ENCODE measurements at regions of chr7 and their contacts with region 1.

Region 1: GRCh38 chr7:102433219-102434038 is at the start of gene ORAI2:
- DNase-seq: peak; percentile 91
- ATAC-seq: peak; percentile 62
- H3K4me3 ChIP-seq: peak within 1 kb of the TSS; percentile 87 to 97 (median 94)
- H3K4me3 Mint-ChIP-seq: peak within 1 kb of the TSS; percentile 99
- H3K27ac ChIP-seq: peak within 1 kb of the TSS; percentile 98 to 100
- H3K27ac Mint-ChIP-seq: peak within 1 kb of the TSS; percentile 98
- H3K4me1 ChIP-seq: peaks cover 67 to 75% of the 10 kb centered on the region in 2 donors
- H3K4me1 Mint-ChIP-seq: peaks cover 67% of the 10 kb centered on the region
- H3K27me3 ChIP-seq: no peaks in the 10 kb centered on the region
- H3K27me3 Mint-ChIP-seq: no peaks in the 10 kb centered on the region
- CTCF ChIP-seq: no peak
- total RNA-seq, gene ORAI2: 450 and 461 TPM in 2 replicates

Region 2: GRCh38 chr7:102404005-102404861 is 29.2 kb before region 1 on chr7:
- CTCF ChIA-PET with region 1: interaction called, 1,182 read pairs
- POLR2A ChIA-PET with region 1: interaction called, 69 read pairs
- intact Hi-C with region 1: no loop called
- DNase-seq: peak; percentile 81
- ATAC-seq: peak; percentile 86
- H3K4me3 ChIP-seq: no peak overlapping the region
- H3K4me3 Mint-ChIP-seq: no peak overlapping the region
- H3K27ac ChIP-seq: no peak overlapping the region
- H3K27ac Mint-ChIP-seq: no peak overlapping the region
- H3K4me1 ChIP-seq: peaks cover 20 to 28% of the 10 kb centered on the region in 2 donors
- H3K4me1 Mint-ChIP-seq: peaks cover 36% of the 10 kb centered on the region
- H3K27me3 ChIP-seq: no peaks in the 10 kb centered on the region
- H3K27me3 Mint-ChIP-seq: no peaks in the 10 kb centered on the region
- CTCF ChIP-seq: peak; percentile 87

Region 3: GRCh38 chr7:102455596-102455995 is 22.2 kb after region 1 on chr7:
- CTCF ChIA-PET with region 1: interaction called, 10 read pairs
- POLR2A ChIA-PET with region 1: interaction called, 11 read pairs
- intact Hi-C with region 1: no loop called
- DNase-seq: no peak
- ATAC-seq: no peak
- H3K4me3 ChIP-seq: no peak overlapping the region
- H3K4me3 Mint-ChIP-seq: no peak overlapping the region
- H3K27ac ChIP-seq: no peak overlapping the region
- H3K27ac Mint-ChIP-seq: no peak overlapping the region
- H3K4me1 ChIP-seq: peaks cover 0 to 1% of the 10 kb centered on the region in 2 donors
- H3K4me1 Mint-ChIP-seq: peaks cover 6% of the 10 kb centered on the region
- H3K27me3 ChIP-seq: no peaks in the 10 kb centered on the region
- H3K27me3 Mint-ChIP-seq: no peaks in the 10 kb centered on the region
- CTCF ChIP-seq: no peak

Region 4: GRCh38 chr7:102472116-102473041 is 39.0 kb after region 1 on chr7:
- CTCF ChIA-PET with region 1: no interaction called
- POLR2A ChIA-PET with region 1: no interaction called
- intact Hi-C with region 1: no loop called
- DNase-seq: no peak
- ATAC-seq: no peak
- H3K4me3 ChIP-seq: no peak overlapping the region
- H3K4me3 Mint-ChIP-seq: no peak overlapping the region
- H3K27ac ChIP-seq: no peak overlapping the region
- H3K27ac Mint-ChIP-seq: peak overlapping the region; percentile 10
- H3K4me1 ChIP-seq: no peaks in the 10 kb centered on the region
- H3K4me1 Mint-ChIP-seq: no peaks in the 10 kb centered on the region
- H3K27me3 ChIP-seq: no peaks in the 10 kb centered on the region
- H3K27me3 Mint-ChIP-seq: no peaks in the 10 kb centered on the region
- CTCF ChIP-seq: no peak

Measured in B cell (primary cell).